Prostate gland (tissue), 2 donors: ENCODE measurements at regions of chr4 and their contacts with region 1.

Region 1: GRCh38 chr4:26404743-26405206 is 84.0 kb downstream of the RBPJ start:
- DNase-seq: no peak
- H3K4me3 ChIP-seq: no peak overlapping the region
- H3K27ac ChIP-seq: no peak overlapping the region
- H3K4me1 ChIP-seq: no peaks in the 10 kb centered on the region
- H3K27me3 ChIP-seq: no peaks in the 10 kb centered on the region
- CTCF ChIP-seq: peak in 1 of 4 experiments; percentile 5
- POLR2A ChIP-seq: no peak

Region 2: DNA sequence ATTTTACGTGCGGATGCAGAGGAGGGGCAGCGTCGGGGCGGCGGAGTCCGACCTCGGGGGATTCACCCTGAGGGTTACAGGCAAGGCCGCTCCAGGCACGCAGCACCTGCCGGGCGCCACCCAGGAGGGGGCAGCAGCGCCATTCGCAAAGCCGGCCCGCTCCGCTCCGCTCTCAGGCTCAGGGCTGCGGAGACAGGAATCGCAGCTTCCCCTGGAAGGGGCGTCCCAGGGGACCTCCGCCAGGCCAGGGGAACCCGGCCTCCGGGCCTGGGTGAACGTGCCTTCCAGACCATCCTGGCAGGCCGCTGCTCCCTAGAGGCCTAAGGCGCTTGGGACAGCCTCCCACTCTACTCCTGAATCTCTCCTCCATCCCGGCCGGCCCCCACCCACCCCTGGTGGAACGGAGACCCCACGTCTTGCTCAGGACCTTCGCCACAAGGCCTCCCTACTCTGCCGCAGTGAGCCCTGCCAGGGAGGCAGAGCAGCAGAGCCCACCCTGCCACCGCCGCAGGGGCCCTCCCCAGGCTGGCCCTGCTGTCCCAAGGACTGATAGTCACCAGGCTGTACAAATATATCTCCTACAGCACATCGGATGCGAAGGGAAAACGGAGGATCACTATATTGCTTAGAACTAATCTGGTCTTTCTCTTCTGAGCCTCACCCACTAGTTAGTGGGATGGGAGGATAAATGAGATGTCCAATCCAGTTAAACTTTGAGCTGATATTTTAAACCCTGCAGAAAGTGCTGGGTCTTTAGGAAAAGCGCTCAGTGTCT is 375.8 kb before region 1 on chr4:
- intact Hi-C with region 1: loop called (anchors 5 kb)
- DNase-seq: peak; percentile 46
- H3K4me3 ChIP-seq: no peak overlapping the region
- H3K27ac ChIP-seq: no peak overlapping the region
- H3K4me1 ChIP-seq: no peaks in the 10 kb centered on the region
- H3K27me3 ChIP-seq: no peaks in the 10 kb centered on the region
- CTCF ChIP-seq: peak; percentile 20 to 83 (median 66)
- POLR2A ChIP-seq: no peak

Region 3: DNA sequence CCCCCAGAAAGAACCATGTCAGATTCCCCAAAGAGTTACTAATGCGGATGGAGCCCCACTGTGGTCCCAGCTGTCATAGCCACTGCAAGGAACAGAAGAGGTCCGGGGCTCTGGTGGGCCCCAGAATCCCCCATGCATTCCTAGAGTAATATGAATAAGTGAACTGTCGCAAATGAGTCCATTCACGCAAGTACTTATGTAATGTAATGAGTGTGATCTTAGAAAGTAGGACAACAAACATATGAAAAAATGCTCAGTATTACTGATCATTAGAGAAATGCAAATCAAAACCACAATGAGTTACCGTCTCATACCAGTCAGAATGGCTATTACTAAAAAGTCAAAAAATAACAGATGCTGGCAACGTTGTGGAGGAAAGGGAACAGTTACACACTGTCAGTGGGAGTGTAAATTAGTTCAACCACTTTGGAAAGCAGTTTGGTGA is 225.4 kb before region 1 on chr4:
- intact Hi-C with region 1: loop called (anchors 10 kb)
- DNase-seq: no peak
- H3K4me3 ChIP-seq: no peak overlapping the region
- H3K27ac ChIP-seq: no peak overlapping the region
- H3K4me1 ChIP-seq: peaks cover 7% of the 10 kb centered on the region
- H3K27me3 ChIP-seq: no peaks in the 10 kb centered on the region
- CTCF ChIP-seq: no peak
- POLR2A ChIP-seq: no peak

Region 4: DNA sequence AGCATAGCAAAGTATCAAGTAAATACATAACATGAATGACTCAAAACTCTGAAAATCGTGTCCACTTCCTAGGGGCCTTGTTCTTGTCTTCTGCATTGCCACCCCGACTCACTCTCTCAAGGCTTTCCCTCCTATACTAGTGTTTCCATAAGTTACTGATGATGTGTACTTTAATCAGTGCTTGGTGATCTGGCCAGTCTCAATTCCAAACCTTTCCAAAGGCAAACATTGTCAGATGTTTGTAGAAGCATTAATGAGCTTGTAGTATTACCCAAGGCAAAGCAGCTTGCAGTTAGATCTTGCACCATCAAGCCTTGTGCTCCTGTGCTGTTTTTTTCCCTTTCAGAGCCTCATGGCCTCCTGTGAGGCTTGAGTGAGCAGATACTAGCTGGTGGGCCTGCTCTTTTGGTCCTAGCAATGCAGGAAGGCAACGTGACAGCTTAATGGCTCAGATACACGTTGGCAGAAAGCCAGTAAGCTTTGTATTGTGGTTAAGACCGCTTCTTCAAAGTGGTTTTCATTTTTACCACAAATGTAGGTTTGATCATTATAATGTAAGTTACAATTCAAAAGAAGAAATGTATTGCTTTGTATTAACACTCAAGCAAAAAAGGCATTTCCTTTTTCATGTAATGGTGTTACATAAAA is 32.1 kb before region 1 on chr4:
- intact Hi-C with region 1: no loop called
- DNase-seq: peak; percentile 19
- H3K4me3 ChIP-seq: no peak overlapping the region
- H3K27ac ChIP-seq: no peak overlapping the region
- H3K4me1 ChIP-seq: peaks cover 4% of the 10 kb centered on the region
- H3K27me3 ChIP-seq: no peaks in the 10 kb centered on the region
- CTCF ChIP-seq: no peak
- POLR2A ChIP-seq: no peak

Region 5: DNA sequence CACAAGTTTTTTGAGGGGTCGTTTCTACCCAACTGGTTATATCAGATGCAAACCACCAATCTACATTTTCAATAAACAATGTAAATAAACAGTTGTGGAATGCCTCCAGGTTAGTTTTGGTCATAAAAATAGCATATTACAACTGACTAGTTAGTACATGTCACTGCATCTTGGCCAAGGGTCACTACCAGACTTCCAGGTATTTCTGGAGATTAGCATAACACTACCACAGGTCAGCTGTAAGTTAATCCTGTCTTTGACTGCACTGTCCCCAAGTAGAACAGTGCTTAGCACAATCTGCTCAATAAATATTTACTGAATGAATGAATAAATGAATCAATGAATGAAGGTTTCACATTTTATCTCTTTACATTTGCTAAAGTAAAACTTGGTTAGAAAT is 243.5 kb after region 1 on chr4:
- intact Hi-C with region 1: no loop called
- DNase-seq: no peak
- H3K4me3 ChIP-seq: no peak overlapping the region
- H3K27ac ChIP-seq: no peak overlapping the region
- H3K4me1 ChIP-seq: no peaks in the 10 kb centered on the region
- H3K27me3 ChIP-seq: no peaks in the 10 kb centered on the region
- CTCF ChIP-seq: no peak
- POLR2A ChIP-seq: no peak